ENCODE measurements at regions of chr7 and their contacts with region 1.

Region 1: GRCh38 chr7:129224251-129225205 is at the start of gene AHCYL2:
- DNase-seq: peak; percentile 98 to 99 (median 99)
- ATAC-seq: peak; percentile 99 to 100 (median 99)
- H3K4me3 ChIP-seq: peak within 1 kb of the TSS; percentile 71 to 99 (median 85)
- H3K27ac ChIP-seq: peak within 1 kb of the TSS; percentile 90 to 99 (median 95)
- H3K4me1 ChIP-seq: peaks cover 0 to 31% (median 9%) of the 10 kb centered on the region in 12 donors
- H3K27me3 ChIP-seq: no peaks in the 10 kb centered on the region
- CTCF ChIP-seq: no peak
- POLR2A ChIP-seq: peak in 1 of 2 donors; percentile 25
- total RNA-seq, gene AHCYL2: 3.6 to 7.6 (median 6.5) TPM

Region 2: DNA sequence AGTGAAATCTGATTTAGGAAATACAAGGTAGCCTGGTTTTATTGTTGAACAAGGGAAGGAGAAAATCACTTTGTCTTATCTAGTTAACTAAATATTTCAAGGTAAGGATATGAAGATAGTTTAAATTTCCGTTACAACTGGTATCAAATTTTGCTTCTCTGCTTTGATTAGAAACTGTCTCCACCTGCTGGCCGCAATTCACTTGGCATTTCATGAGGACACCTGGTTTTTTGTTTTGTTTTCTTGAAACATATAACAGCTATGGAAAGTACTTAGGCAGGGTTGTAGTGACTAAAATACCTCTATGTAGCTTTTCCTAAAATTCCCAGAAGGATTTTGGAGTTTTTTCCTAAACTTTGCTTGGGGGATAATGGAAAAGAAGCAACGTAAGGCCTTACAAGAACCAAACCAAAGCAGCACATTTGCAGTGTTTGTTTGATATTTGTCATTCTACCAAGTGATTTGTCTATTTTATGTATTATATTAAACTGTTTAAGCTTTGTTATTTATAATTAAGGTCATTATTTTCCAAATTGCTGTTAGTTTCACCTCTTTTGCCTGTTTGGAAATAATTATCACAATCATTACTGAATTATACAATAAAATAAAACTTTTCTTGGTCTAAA is 73.9 kb after region 1 on chr7:
- intact Hi-C with region 1: loop called in 9 of 10 experiments (anchors 2 to 5 kb)
- DNase-seq: peak in 1 of 5 donors; percentile 44
- ATAC-seq: no peak
- H3K4me3 ChIP-seq: no peak overlapping the region
- H3K27ac ChIP-seq: no peak overlapping the region
- H3K4me1 ChIP-seq: peaks cover 0 to 10% (median 5%) of the 10 kb centered on the region in 12 donors
- H3K27me3 ChIP-seq: no peaks in the 10 kb centered on the region
- CTCF ChIP-seq: peak; percentile 56 to 77 (median 66)
- POLR2A ChIP-seq: no peak

Region 3: GRCh38 chr7:129611246-129612111 is 387.0 kb after region 1 on chr7 and contains the start of gene NRF1:
- intact Hi-C with region 1: loop called in 4 of 10 experiments (anchors 5 to 10 kb)
- DNase-seq: peak; percentile 92 to 95 (median 93)
- ATAC-seq: peak; percentile 91 to 98 (median 97)
- H3K4me3 ChIP-seq: peak within 1 kb of the TSS; percentile 67 to 98 (median 87)
- H3K27ac ChIP-seq: peak within 1 kb of the TSS; percentile 91 to 99 (median 97)
- H3K4me1 ChIP-seq: peaks cover 0 to 73% (median 35%) of the 10 kb centered on the region in 12 donors
- H3K27me3 ChIP-seq: no peaks in the 10 kb centered on the region
- CTCF ChIP-seq: peak in 8 of 12 donors; percentile 11 to 45 (median 25)
- POLR2A ChIP-seq: peak in 1 of 2 donors; percentile 66
- total RNA-seq, gene NRF1: 7.8 to 20.7 (median 13.5) TPM

Measured in heart left ventricle (tissue), 16 donors.